WTC11 (cell line): ENCODE measurements at regions of chr6 and their contacts with region 1.

Region 1: DNA sequence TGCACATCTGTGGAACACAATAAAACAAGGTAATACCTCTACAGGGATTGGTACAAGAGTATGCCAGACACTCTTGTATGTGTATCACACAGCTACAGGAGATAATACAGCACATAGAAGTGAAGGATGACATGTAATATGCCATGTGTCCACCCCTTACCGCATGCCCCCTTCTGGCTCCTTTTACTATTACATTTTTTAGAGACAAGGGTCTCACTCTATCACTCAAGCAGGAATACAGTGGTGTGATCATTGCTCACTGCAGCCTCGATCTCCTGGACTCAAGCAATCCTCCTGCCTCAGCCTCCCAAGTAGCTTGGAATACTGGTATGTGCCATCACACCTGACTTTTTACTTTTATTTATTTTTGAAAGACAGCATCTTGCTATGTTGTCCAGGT is 4.2 kb upstream of the NCR3 start:
- DNase-seq: no peak
- ATAC-seq: peak; percentile 49
- H3K4me3 Mint-ChIP-seq: no peak overlapping the region
- H3K27ac Mint-ChIP-seq: no peak overlapping the region
- H3K4me1 Mint-ChIP-seq: peaks cover 17% of the 10 kb centered on the region
- H3K27me3 Mint-ChIP-seq: no peaks in the 10 kb centered on the region
- CTCF ChIP-seq: peak; percentile 48

Region 2: DNA sequence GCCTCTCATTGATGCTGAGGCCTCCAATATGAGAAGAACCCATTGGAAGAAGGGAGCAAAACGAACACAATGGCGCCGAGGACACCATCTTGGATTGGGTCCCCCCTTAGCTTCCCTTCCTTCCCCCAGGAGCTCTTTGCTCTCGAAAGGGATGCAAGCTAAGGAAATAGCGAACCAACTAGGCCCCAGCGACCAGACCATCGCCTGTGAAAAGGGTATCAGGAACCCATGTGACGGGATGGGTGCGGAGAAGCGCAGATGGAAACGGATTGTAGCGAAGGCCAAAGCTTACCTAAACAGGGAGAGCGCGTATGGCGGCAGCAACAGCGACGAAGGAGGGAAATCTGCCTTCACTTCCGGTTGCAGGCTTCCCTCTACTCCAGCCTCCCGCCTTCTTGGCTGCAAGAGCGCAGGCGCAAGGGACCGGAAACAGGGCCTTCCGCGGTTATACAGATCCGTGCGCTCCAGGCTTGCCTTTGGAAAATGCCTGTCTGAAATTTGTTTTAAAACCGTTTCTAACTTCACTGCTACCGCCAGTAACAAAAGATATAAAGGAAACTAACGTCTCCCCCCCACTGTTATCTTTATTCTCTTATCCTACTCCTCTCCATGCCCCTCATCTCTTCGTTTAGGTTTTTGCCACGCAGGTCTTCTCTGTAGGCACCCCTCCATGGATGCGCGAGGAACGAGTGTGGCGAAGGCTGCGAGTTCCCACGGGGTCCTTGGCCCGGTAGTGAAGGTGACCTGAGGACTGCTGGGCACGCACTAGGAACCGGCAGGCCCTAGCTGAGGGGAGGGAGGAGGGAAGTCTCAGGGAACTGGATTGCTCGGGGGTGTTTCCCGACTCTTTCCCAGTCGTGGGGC is 55.1 kb before region 1 on chr6 and contains the start of gene DDX39B:
- CTCF ChIA-PET with region 1: interaction called, 319 read pairs
- POLR2A ChIA-PET with region 1: interaction called, 5 read pairs
- DNase-seq: peak; percentile 93
- ATAC-seq: peak; percentile 66
- H3K4me3 Mint-ChIP-seq: peak within 1 kb of the TSS; percentile 99
- H3K27ac Mint-ChIP-seq: peak within 1 kb of the TSS; percentile 98
- H3K4me1 Mint-ChIP-seq: peaks cover 48% of the 10 kb centered on the region
- H3K27me3 Mint-ChIP-seq: no peaks in the 10 kb centered on the region
- CTCF ChIP-seq: no peak
- total RNA-seq, gene DDX39B: 704 to 738 TPM (median 712 TPM) in 3 replicates

Region 3: DNA sequence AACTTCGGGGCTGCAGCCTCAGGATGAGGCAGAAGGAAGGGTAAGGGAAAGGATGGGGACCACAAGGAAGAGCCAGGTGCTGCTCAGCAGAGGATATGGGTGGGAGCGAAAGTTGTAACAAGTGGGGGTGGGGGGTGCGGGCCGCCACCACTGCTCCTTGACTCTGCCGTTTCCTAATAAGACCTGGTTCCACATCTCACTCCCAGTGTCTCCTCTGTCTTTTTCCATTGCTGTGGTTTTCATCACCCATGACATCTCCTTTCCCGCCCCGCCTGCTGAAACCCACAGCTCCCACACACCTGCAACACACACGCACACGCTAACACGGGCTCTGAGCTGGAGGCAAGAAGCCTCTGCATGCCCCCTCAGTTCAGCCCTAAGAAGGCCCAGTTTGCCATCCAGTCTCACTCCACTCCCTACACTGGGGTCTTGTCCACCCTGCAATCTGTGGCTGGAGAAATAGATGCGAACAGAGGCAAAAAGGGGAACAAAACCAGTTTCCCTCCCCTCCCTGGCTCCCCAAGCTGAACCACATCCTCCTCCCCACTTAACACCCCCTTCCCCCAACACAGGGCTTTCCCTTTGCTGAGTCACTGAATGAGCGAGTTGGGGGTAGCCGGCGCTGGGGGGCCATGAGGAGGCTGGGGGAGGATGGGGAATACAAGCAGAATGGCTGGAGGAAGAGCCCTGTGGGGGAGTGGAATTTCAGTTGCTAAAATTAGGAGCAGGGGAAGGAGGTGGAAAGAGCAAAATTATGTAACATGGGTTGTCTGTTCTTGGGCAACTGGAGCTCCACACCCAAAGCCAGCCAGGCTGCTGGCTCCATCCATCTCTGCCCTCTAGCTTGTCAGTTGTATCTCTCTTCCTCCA is 38.1 kb before region 1 on chr6:
- CTCF ChIA-PET with region 1: interaction called, 10 read pairs
- POLR2A ChIA-PET with region 1: no interaction called
- DNase-seq: no peak
- ATAC-seq: no peak
- H3K4me3 Mint-ChIP-seq: no peak overlapping the region
- H3K27ac Mint-ChIP-seq: no peak overlapping the region
- H3K4me1 Mint-ChIP-seq: peaks cover 9% of the 10 kb centered on the region
- H3K27me3 Mint-ChIP-seq: no peaks in the 10 kb centered on the region; the same call in 1 of the 2 replicates
- CTCF ChIP-seq: no peak

Region 4: DNA sequence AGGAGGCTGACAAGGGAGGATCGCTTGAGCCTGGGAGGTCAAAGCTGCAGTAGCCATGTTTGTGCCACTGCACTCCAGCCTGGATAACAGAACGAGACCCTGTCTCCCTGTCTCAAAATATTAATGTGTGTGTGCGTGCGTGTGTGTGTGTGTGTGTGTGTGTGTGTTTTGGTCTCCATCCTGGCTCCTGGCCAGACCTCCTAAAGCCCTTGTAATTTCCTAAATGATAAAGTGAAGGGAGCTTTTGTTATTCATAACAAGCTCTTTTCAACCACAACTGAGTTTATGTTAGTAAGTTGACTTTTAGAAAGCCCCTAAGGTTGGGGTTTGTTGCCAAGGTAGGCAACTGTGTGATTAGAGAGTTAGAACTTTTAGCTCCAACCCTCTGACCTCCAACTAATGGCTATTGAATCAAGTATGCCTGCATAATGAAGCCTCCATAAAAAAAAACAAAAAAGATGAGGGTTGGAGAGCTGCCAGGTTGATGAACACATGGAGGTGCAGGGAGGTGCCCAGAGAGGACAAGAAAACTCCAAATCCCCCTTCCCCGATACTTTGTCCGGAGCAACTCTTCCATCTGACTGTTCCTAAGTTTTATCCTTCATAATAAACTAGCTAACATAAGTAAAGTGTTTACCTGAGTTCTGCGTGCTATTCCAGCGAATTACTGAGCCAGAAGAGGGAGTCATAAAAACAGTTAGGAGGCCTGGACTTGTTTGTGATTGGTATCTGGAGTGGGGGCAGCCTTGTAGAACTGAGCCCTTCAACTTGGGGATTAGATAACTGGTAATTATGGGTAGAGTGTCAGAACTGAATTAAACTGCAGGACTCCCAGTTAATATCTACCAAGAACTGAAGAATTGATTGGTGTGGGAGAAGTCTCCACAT is 12.8 kb after region 1 on chr6:
- CTCF ChIA-PET with region 1: interaction called, 32 read pairs
- POLR2A ChIA-PET with region 1: no interaction called
- DNase-seq: no peak
- ATAC-seq: no peak
- H3K4me3 Mint-ChIP-seq: no peak overlapping the region
- H3K27ac Mint-ChIP-seq: no peak overlapping the region
- H3K4me1 Mint-ChIP-seq: peaks cover 10% of the 10 kb centered on the region
- H3K27me3 Mint-ChIP-seq: peaks cover 6% of the 10 kb centered on the region; the same call in 1 of the 2 replicates
- CTCF ChIP-seq: no peak

Region 5: DNA sequence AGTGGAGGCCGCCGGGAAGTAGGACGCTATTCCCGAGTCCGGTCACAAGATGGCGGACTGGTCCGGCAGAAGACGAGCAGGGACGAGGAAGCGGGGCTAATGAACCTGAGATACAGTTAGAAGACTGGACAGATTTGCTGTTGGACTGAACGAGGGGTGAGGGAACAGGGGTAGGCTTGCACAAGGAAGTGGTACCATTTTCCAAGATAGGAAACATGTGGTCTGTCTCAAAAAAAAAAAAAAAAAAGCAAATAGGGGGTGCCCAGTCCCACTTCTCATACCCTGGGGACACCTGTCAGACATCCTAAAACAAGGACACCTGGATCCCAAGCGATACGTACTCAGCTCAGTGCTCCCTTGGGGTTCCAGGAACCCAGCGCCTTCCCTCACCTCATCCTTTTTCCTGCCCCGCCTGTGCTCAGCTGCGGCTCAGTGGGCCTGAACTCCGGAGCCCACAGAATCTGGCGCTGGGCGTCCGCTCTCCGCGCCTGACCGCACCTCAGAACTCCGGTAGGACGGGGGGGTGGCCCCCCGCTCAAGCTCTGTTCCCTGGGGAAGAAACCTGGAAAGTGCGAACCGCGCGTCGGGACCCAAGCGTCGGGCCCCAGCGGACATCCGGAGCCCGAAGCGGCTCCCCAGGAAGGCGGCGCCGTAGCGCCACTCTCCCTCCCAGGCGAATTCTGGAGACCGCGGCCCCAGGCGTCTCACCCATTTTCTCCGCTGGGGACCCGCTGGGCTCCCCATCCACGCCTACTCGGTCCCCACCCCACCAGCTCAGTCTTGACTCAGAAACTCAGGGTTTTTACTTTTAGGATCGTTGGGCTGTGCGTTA is 84.0 kb after region 1 on chr6 and contains the start of gene LY6G5C:
- CTCF ChIA-PET with region 1: no interaction called
- POLR2A ChIA-PET with region 1: no interaction called
- DNase-seq: peak; percentile 77
- ATAC-seq: peak; percentile 39
- H3K4me3 Mint-ChIP-seq: peak within 1 kb of the TSS; percentile 89
- H3K27ac Mint-ChIP-seq: no peak within 1 kb of the TSS
- H3K4me1 Mint-ChIP-seq: peaks cover 16% of the 10 kb centered on the region
- H3K27me3 Mint-ChIP-seq: peaks cover 24% of the 10 kb centered on the region
- CTCF ChIP-seq: peak; percentile 6; the same call in 1 of the 2 replicates
- total RNA-seq, gene LY6G5C: 0.98 to 1.6 TPM (median 1.0 TPM) in 3 replicates

Region 6: DNA sequence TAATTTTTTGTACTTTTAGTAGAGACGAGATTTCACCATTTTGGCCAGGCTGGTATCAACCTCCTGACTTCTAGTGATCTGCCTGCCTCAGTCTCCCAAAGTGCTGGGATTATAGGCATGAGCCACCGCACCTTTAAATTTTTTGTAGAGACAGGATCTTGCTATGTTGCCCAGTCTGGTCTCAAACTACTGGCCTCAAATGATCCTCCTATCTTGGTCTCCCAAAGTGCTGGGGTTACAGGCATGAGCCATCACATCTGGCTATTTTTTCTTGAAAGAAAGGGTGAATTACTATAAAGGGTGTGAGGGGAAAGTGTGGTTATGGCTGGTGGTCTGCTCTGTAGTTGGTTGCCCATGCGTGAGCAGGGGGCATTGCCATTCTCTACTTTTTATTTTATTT is 111.2 kb after region 1 on chr6:
- CTCF ChIA-PET with region 1: no interaction called
- POLR2A ChIA-PET with region 1: no interaction called
- DNase-seq: no peak
- ATAC-seq: no peak
- H3K4me3 Mint-ChIP-seq: no peak overlapping the region
- H3K27ac Mint-ChIP-seq: no peak overlapping the region
- H3K4me1 Mint-ChIP-seq: peaks cover 16% of the 10 kb centered on the region
- H3K27me3 Mint-ChIP-seq: peaks cover 7% of the 10 kb centered on the region; the same call in 1 of the 2 replicates
- CTCF ChIP-seq: no peak